Activated T-helper 1 cell treated with anti-CD3 and anti-CD28 coated beads, Interleukin-12 subunit alpha, Interleukin-12 subunit beta, Interleukin-2, Interleukin-4 antibody, amounts not matched to agents 30 ng/mL and 10 ng/mL and 1 ng/mL, durations not matched to agents 14 hours and 24 hours and 36 hours (primary cell): ENCODE measurements at regions of chr20 and their contacts with region 1.

Region 1: GRCh38 chr20:18566892-18567742 is at the start of gene SMIM26:
- DNase-seq: peak; percentile 91
- H3K4me3 Mint-ChIP-seq: peak within 1 kb of the TSS; percentile 95
- H3K27ac Mint-ChIP-seq: peak within 1 kb of the TSS; percentile 95
- H3K4me1 Mint-ChIP-seq: peaks cover 10% of the 10 kb centered on the region
- H3K27me3 Mint-ChIP-seq: no peaks in the 10 kb centered on the region
- total RNA-seq, gene SMIM26: 54.9 and 57.9 TPM in 2 replicates

Region 2: DNA sequence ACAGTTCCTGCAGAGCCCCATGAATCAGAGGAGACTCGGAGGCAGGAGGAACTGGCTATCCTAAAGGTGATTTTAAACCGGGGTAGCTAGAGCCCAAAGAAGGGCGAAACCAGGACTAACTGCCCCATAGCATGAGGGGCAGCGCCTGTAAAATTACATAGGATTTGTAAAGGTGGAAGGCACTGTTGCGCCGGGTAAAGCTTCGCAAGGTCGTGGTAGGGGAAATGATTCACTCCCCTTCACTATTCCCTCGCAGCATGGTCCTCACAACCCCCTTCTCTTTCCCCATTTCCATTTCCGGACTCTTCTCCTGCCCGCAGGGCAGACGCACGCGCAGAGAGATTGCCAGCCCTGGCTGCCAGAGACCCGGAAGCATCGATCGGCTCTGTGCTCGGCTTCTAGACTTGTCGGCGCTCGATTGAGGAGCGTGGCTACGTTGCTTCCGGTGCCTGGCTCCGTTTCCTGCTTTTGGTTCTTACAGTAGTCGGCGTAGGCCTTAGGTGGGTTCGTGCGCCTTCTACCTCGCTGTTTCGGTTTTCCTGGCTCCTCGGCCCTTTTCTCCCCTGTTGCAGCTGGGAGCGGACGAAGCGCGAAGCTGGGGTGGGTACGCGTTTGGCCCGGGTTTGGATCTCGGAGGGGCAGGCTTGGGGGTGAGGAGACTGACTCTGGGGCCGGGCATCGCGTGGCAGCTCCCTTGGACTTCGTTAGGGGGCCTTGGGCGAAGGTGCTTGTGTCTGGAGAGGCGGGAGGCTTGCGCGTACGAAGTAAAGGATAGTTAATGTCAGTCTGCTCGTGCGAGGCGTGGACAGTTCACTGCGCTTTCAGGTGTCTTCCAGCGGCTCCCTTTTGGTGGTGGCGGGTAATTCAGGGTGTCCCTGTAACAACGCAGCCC is 1837.3 kb before region 1 on chr20 and contains the start of gene SNRPB2:
- intact Hi-C with region 1: loop called (anchors 5 kb)
- DNase-seq: peak; percentile 88
- H3K4me3 Mint-ChIP-seq: peak within 1 kb of the TSS; percentile 98
- H3K27ac Mint-ChIP-seq: peak within 1 kb of the TSS; percentile 98
- H3K4me1 Mint-ChIP-seq: peaks cover 50% of the 10 kb centered on the region
- H3K27me3 Mint-ChIP-seq: peaks cover 8% of the 10 kb centered on the region
- total RNA-seq, gene SNRPB2: 130 and 131 TPM in 2 replicates

Region 3: GRCh38 chr20:17579369-17580039 is 987.6 kb before region 1 on chr20:
- intact Hi-C with region 1: loop called (anchors 5 kb)
- DNase-seq: no peak
- H3K4me3 Mint-ChIP-seq: no peak overlapping the region
- H3K27ac Mint-ChIP-seq: no peak overlapping the region
- H3K4me1 Mint-ChIP-seq: peaks cover 21% of the 10 kb centered on the region
- H3K27me3 Mint-ChIP-seq: no peaks in the 10 kb centered on the region

Region 4: GRCh38 chr20:18466894-18467730 is 100.0 kb before region 1 on chr20 and contains the starts of genes DZANK1 and POLR3F:
- intact Hi-C with region 1: loop called (anchors 1 kb)
- DNase-seq: peak; percentile 90
- H3K4me3 Mint-ChIP-seq: peak within 1 kb of the TSS; percentile 99
- H3K27ac Mint-ChIP-seq: peak within 1 kb of the TSS; percentile 92
- H3K4me1 Mint-ChIP-seq: peaks cover 31% of the 10 kb centered on the region
- H3K27me3 Mint-ChIP-seq: no peaks in the 10 kb centered on the region
- total RNA-seq, gene DZANK1: 1.1 and 1.8 TPM in 2 replicates
- total RNA-seq, gene POLR3F: 13.4 and 16.6 TPM in 2 replicates

Region 5: DNA sequence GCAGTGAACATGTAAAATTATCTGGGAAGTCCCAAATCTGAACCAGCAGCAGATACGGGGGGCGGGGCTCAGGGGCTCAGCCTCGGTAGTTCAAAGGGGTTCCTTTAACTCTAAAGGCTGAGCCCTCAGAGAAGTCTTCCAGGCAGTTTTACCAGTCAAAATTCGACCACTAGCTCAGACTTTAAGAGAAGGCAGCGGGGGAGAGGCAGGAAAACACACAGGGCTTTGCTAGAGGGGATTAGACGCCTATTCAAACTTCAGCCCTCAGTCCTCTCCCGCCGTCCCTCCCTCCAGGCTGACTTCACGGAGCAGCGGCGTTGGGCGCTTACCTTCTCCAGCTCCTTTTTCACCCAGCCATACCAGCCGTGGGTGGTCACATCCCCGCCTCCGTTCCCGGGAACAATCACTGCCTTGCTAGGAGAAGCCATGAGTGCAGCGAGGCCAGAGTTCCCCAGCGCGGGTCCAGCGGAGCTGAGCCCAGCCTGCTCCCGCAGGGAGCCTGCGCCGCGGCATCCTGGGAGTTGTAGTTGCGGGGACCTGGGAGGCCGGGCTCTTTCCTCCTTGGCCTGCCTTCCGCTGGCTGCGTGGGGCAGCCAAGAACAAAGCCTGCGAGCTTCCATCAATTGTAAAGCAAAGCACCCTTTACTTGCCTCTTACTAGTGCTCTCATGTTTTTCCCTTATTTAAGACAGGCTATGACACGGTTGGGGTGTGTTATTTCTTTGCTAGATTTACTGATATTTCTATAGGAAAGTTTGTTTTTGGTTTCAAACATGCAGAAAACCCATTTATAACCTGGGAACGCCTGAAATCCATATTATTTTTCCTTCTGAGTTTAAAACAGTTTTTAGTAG is 70.2 kb before region 1 on chr20 and contains the start of gene RBBP9:
- intact Hi-C with region 1: loop called (anchors 1 kb)
- DNase-seq: peak; percentile 70
- H3K4me3 Mint-ChIP-seq: peak within 1 kb of the TSS; percentile 91
- H3K27ac Mint-ChIP-seq: peak within 1 kb of the TSS; percentile 64
- H3K4me1 Mint-ChIP-seq: peaks cover 16% of the 10 kb centered on the region
- H3K27me3 Mint-ChIP-seq: no peaks in the 10 kb centered on the region
- total RNA-seq, gene RBBP9: 18.6 and 18.7 TPM in 2 replicates

Region 6: DNA sequence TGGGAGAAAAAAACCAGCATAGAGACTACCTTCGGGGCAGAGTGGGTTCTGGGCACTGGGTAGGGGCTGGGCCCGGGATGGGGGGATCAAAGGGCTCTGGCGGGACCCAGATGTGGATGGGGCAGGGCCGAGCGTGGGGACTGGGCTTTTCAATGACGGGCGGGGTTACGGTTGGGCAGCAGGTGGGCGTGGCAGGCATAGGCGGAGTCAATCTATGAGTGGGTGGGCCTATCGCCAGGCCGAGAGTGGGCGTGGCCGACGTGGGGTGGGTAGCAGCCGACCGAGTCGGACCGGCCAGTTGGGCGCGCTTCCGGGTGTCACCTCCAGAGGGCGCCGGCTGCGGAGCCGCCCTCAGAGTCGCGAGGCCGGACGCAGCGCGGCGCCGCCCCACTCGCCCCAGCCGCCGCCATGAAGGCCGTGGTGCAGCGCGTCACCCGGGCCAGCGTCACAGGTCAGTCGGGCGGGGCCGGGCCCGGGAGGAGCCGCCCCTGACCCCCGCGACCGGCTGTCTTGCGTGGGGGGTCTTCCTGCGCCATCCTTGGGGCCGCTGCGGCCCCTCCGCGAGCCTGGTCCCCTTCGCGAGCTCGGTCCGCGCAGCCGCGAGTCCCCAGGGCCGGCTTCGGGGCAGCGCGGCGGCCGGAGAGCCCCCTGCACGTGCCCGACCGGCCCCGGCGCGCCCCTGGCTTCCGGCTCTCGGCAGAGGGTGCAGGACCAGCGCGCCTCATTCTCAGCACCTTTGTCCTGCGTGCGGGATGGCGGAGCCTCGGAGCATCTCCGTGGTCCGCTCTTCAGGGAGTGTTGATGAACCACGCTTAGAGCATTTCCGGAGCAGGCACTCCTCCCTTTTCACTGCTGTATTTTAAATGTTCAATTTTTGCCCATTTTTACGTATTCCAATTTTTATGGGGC is 20.8 kb after region 1 on chr20 and contains the start of gene DTD1:
- intact Hi-C with region 1: loop called (anchors 1 kb)
- DNase-seq: peak; percentile 80
- H3K4me3 Mint-ChIP-seq: peak within 1 kb of the TSS; percentile 93
- H3K27ac Mint-ChIP-seq: peak within 1 kb of the TSS; percentile 82
- H3K4me1 Mint-ChIP-seq: peaks cover 25% of the 10 kb centered on the region
- H3K27me3 Mint-ChIP-seq: peaks cover 10% of the 10 kb centered on the region
- total RNA-seq, gene DTD1: 37.7 and 44.0 TPM in 2 replicates

Region 7: DNA sequence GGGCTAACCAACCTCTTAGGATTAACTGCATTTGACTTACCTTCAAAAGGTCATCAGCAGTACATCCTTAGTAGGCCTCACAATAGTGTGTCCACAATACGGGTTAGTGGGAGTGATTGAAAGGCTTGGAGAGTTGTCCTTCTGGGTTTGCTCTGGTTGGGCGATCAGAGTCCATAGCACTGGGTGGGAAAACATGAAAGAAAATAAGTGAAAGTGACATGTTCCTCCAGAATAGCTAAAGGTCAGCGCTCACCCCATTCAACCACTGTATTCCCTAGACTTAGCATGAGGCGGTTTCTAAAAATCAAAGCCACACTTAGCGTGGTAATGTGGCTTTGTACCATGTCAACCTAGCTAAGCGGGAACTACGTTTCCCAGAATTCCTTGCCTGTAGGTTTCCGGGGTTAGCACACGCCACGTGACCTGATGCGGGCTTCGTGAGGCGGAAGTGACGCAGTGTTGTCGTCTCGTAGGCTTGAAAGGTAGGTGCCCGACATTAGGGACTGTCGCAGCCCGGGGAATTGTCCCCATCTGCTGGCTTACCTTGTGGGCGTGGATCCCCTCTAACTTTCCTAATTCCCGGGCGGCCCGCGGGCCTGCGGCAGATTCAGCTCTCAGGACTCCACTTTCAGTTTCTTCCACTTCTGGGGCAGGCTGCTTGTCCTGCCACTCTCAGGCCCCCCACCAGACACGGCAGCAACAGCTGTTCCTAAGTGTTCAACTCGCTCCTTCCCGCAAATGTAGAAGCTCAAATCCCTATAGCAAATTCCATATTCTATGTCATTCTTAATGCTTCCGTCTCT is 226.7 kb after region 1 on chr20:
- intact Hi-C with region 1: loop called (anchors 1 kb)
- DNase-seq: peak; percentile 80
- H3K4me3 Mint-ChIP-seq: peak overlapping the region; percentile 87
- H3K27ac Mint-ChIP-seq: peak overlapping the region; percentile 82
- H3K4me1 Mint-ChIP-seq: peaks cover 12% of the 10 kb centered on the region
- H3K27me3 Mint-ChIP-seq: no peaks in the 10 kb centered on the region